Naive thymus-derived CD4-positive, alpha-beta T cell (primary cell): ENCODE measurements at regions of chr3 and their contacts with region 1.

Region 1: GRCh38 chr3:73502609-73503583 is 121.8 kb downstream of the PDZRN3 start:
- DNase-seq: peak in 6 of 9 donors; percentile 13 to 41 (median 21)
- ATAC-seq: peak; percentile 45
- H3K4me3 ChIP-seq: no peak overlapping the region
- H3K4me3 Mint-ChIP-seq: no peak overlapping the region
- H3K27ac ChIP-seq: no peak overlapping the region
- H3K27ac Mint-ChIP-seq: no peak overlapping the region
- H3K4me1 ChIP-seq: no peaks in the 10 kb centered on the region
- H3K4me1 Mint-ChIP-seq: no peaks in the 10 kb centered on the region
- H3K27me3 ChIP-seq: no peaks in the 10 kb centered on the region
- H3K27me3 Mint-ChIP-seq: peaks cover 4 to 27% (median 19%) of the 10 kb centered on the region in 5 donors

Region 2: GRCh38 chr3:73100741-73101559 is 401.9 kb before region 1 on chr3:
- CTCF ChIA-PET with region 1: interaction called, 3 read pairs
- POLR2A ChIA-PET with region 1: no interaction called
- intact Hi-C with region 1: loop called in 1 of 2 experiments (anchors 1 kb)
- DNase-seq: peak; percentile 36 to 74 (median 62)
- ATAC-seq: peak; percentile 86
- H3K4me3 ChIP-seq: no peak overlapping the region
- H3K4me3 Mint-ChIP-seq: no peak overlapping the region
- H3K27ac ChIP-seq: no peak overlapping the region
- H3K27ac Mint-ChIP-seq: peak overlapping the region in 1 of 9 donors; percentile 23
- H3K4me1 ChIP-seq: no peaks in the 10 kb centered on the region
- H3K4me1 Mint-ChIP-seq: peaks cover 0 to 6% (median 0%) of the 10 kb centered on the region in 7 donors
- H3K27me3 ChIP-seq: peaks cover 0 to 3% of the 10 kb centered on the region in 2 donors
- H3K27me3 Mint-ChIP-seq: peaks cover 0 to 9% (median 4%) of the 10 kb centered on the region in 5 donors

Region 3: GRCh38 chr3:73451306-73451944 is 51.5 kb before region 1 on chr3:
- CTCF ChIA-PET with region 1: no interaction called
- POLR2A ChIA-PET with region 1: no interaction called
- intact Hi-C with region 1: loop called in 1 of 2 experiments (anchors 1 kb)
- DNase-seq: no peak
- ATAC-seq: no peak
- H3K4me3 ChIP-seq: no peak overlapping the region
- H3K4me3 Mint-ChIP-seq: no peak overlapping the region
- H3K27ac ChIP-seq: no peak overlapping the region
- H3K27ac Mint-ChIP-seq: no peak overlapping the region
- H3K4me1 ChIP-seq: no peaks in the 10 kb centered on the region
- H3K4me1 Mint-ChIP-seq: no peaks in the 10 kb centered on the region
- H3K27me3 ChIP-seq: no peaks in the 10 kb centered on the region
- H3K27me3 Mint-ChIP-seq: peaks cover 0 to 10% (median 0%) of the 10 kb centered on the region in 5 donors

Region 4: GRCh38 chr3:73868688-73869315 is 365.9 kb after region 1 on chr3:
- CTCF ChIA-PET with region 1: no interaction called
- POLR2A ChIA-PET with region 1: no interaction called
- intact Hi-C with region 1: no loop called
- DNase-seq: no peak
- ATAC-seq: no peak
- H3K4me3 ChIP-seq: no peak overlapping the region
- H3K4me3 Mint-ChIP-seq: no peak overlapping the region
- H3K27ac ChIP-seq: no peak overlapping the region
- H3K27ac Mint-ChIP-seq: no peak overlapping the region
- H3K4me1 ChIP-seq: no peaks in the 10 kb centered on the region
- H3K4me1 Mint-ChIP-seq: no peaks in the 10 kb centered on the region
- H3K27me3 ChIP-seq: no peaks in the 10 kb centered on the region
- H3K27me3 Mint-ChIP-seq: no peaks in the 10 kb centered on the region